Cardiac septum (tissue), 1 donor: ENCODE measurements at regions of chr2 and their contacts with region 1.

Region 1: GRCh38 chr2:238203094-238203972 is at the start of gene ILKAP:
- DNase-seq: peak; percentile 95
- total RNA-seq, gene ILKAP: 29.5 TPM

Region 2: GRCh38 chr2:237833546-237833945 is 369.8 kb before region 1 on chr2:
- intact Hi-C with region 1: no loop called
- DNase-seq: no peak

Region 3: DNA sequence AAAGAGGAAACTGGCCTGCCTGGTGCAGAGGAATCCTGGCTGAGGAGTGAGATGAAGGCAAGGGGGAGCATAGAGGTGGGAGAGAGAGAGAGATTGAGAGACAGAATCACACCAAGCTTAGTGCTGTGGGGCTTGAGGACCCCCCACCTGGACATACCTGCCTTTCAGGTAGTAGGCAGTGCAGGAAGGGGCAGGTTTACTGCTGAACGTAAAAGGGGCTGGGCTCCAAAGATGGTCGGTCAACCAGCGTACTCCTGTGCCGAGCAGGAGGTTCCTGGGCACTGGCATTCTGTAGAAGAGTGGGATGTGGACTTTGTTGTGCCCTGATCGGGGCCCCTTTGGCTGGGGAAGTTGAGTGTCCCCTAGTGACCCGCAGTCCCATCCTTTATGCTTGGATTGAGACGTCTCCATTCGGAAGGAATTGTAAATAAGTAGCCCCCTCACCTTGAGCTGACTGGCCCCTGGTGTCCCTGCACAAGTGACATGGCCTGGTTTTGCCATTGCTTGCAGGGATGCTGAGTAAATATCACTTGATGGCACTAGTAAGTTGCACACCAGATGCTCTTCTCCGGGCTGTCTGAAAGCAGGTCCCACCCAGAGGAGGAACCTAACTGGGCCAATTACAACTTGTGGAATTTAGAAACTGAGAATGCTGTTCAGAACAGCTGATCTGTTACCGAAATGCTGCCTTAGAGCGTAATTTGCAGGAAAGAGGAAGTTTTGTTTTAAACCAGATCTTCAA is 235.0 kb before region 1 on chr2:
- intact Hi-C with region 1: no loop called
- DNase-seq: no peak

Region 4: GRCh38 chr2:238239872-238240751 is 36.8 kb after region 1 on chr2 and contains the start of gene HES6:
- intact Hi-C with region 1: loop called (anchors 2 kb)
- DNase-seq: peak; percentile 95
- total RNA-seq, gene HES6: 2.7 TPM

Region 5: GRCh38 chr2:238861013-238861730 is 657.8 kb after region 1 on chr2:
- intact Hi-C with region 1: no loop called
- DNase-seq: peak; percentile 36